ENCODE measurements at regions of chr6 and their contacts with region 1.

Region 1: DNA sequence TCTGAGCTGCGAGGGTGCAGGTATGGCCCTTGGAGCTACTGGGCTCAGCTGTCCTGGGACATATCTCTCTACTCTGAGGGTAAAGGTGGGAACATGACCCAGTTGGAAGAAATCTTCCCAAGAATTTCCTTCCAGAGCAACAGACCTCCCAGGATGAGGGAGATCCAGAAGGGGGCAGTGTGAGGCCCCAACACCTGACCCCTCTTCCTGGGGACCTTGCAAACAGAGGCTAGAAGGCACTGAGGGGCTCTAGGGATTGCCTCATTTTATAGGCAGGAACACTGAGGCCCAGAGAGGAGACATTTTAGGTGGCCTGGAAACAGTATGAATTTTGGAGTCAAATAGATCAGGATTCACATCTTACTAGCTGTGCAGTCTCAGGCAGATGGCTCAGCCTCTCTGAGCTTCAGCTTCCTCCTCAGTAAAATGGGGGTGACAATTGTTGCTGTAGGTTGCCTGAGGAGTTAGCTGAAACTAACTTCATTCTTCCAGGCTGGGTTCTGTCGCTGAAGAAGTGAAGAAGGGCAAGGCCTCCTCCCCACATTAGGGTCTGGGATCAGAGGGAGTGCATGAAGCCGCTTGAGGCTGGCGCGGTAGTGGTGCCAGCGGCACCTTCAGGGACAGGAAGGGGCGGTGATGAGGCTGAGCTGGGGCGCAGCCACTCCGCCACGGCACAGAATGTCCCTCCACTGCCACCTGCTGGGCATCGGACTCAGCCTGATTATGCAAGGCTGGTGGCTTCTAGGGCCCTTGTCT is 11.4 kb downstream of the KCNK17 start:
- DNase-seq: peak; percentile 90
- H3K4me3 Mint-ChIP-seq: peak overlapping the region; percentile 18
- H3K27ac Mint-ChIP-seq: peak overlapping the region; percentile 14
- H3K4me1 Mint-ChIP-seq: peaks cover 9% of the 10 kb centered on the region
- H3K27me3 Mint-ChIP-seq: no peaks in the 10 kb centered on the region

Region 2: DNA sequence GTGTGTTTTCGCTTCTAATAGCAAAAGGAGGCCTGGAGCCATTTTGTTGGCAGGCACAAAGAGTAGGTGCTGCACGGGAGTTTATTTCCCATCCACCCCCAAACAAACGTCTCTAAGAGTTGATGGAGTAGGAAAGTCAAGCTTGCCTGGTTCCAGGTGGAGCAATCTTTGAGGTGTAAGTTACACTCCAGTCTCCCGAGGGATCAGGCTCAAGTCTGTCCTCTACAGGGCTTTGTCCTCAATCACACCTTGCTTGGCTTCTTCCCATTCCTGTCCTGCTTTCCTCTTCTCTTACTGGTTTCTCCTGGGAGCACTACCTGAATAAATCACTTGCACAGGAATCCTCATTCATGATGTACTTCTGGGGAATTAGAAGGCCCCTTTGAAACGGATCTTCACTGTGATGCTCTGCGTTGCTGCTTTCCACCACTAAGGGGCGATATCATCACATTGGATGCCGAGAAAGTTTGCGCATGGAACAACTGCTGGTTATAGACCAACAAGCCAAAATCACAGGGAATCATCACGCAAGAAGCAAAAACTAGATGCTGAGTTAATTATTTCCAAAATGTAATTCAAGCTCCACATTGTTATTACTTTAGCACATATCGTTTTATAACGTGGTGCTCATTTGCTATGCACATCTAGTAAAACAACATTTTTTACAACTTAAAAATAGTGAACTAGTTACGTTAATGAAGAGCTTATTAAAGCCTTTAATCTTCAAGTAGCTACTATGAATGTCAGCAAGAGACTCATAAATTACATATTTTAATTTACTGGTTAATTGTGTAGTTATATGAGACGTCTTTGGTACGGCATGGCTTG is 430.9 kb before region 1 on chr6:
- CTCF ChIA-PET with region 1: interaction called, 10 read pairs
- POLR2A ChIA-PET with region 1: no interaction called
- DNase-seq: peak; percentile 66
- H3K4me3 Mint-ChIP-seq: no peak overlapping the region
- H3K27ac Mint-ChIP-seq: no peak overlapping the region
- H3K4me1 Mint-ChIP-seq: peaks cover 19% of the 10 kb centered on the region
- H3K27me3 Mint-ChIP-seq: peaks cover 6% of the 10 kb centered on the region

Region 3: DNA sequence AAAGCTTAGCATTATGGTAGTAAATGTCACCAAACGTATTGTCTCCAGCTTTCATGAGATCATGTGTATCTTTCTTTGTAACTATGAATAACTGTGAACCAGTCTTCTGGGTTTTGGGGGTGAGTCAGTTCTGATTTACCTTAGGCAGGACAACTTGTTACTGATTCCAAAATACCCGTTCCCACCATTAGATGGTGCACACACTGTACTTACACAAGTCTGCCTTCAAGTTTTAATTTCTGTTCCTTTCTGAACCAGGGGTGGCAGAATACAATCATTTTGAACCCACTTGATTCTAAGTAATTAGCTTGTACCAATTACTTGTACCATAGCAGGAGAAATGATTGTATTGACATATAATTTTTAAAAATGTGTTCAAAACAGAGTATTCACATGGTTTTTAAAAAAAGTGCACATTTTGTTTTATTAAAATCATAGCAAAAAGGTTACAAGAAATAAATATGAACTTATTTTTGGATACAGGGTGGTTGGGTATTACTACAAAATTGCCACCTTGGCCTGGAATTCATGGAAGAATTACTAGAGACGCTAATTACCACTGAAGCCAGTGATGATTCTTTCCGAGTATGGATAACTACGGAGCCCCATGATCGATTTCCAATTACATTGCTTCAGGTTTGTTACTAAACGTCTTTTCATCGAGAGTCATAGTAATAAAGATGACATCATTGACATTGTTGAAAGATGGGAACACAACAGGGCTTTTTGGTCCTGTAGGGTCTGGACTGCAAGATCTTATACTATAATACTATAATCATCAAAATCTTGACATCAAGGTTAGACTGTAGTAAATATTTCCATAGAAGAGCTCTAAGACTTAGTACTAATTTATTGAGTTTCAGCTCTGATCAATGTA is 329.4 kb before region 1 on chr6:
- CTCF ChIA-PET with region 1: interaction called, 16 read pairs
- POLR2A ChIA-PET with region 1: no interaction called
- DNase-seq: no peak
- H3K4me3 Mint-ChIP-seq: no peak overlapping the region
- H3K27ac Mint-ChIP-seq: no peak overlapping the region
- H3K4me1 Mint-ChIP-seq: no peaks in the 10 kb centered on the region
- H3K27me3 Mint-ChIP-seq: peaks cover 47% of the 10 kb centered on the region

Region 4: DNA sequence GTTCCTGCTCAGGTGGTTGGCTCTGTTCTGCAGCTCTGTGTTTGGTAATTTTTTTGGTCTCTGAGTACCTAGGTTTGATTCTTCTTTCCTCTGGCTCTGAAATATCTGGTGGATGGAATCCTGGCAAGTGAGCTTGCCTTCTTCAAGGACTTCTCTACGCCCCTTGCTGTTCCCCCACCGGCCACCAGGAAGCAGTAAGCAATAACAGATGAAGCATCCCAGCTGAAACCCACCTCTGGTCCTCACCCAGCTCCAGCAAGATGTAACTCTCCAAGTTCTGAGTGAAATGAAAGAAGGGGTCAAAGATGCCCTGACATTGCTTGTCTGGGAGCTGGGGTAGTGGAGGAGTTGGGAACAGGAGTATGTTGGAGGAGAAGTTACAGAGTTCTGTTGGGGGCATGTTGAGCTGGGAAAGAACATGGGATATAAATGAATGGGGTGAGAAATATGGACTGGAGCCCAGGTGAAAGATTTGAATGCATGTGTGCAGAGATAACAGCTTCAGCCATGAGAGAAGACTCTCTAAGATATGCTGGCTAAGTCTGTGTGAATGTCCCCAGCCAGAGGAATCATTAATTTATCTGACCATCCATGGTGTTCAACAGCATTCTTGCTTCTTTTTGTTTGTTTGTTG is 305.6 kb before region 1 on chr6:
- CTCF ChIA-PET with region 1: interaction called, 15 read pairs
- POLR2A ChIA-PET with region 1: no interaction called
- DNase-seq: peak; percentile 24
- H3K4me3 Mint-ChIP-seq: no peak overlapping the region
- H3K27ac Mint-ChIP-seq: no peak overlapping the region
- H3K4me1 Mint-ChIP-seq: no peaks in the 10 kb centered on the region
- H3K27me3 Mint-ChIP-seq: peaks cover 31% of the 10 kb centered on the region

Region 5: DNA sequence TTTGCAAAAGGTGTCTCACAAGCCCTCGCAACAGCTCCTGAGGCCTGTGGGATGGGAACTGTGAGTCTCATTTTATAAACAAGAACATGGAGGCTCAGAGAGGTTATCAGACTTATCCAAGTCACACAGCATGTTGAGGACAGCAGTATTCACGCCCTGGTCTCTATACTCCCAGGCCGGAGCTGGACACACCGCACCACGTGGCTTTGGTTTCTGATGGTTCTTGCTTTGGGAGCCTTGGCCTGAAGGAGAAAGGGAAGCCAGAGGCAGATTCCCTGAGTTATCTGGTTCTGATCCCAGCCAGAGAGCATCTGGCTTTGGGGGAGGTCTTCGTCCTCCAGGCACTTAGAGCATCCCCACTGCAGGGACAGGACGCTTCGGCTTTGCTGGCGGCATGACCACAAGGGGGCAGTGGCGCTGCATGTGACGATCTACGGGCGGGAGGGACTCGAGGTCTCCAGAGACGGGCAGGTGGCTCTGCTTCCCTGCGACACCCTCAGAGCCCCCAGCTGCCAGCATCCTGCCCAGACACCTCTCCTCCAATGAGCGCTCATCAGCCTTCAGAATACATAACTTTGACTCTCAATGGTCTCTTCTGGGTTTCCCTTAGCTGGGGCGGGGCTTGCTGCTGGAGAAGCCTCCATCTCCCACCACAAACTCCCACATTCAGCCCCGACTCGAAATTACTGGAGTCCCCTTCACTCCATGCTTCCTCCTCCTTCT is 136.5 kb before region 1 on chr6:
- CTCF ChIA-PET with region 1: interaction called, 195 read pairs
- POLR2A ChIA-PET with region 1: interaction called, 10 read pairs
- DNase-seq: peak; percentile 84
- H3K4me3 Mint-ChIP-seq: no peak overlapping the region
- H3K27ac Mint-ChIP-seq: no peak overlapping the region
- H3K4me1 Mint-ChIP-seq: peaks cover 5% of the 10 kb centered on the region
- H3K27me3 Mint-ChIP-seq: no peaks in the 10 kb centered on the region

Region 6: DNA sequence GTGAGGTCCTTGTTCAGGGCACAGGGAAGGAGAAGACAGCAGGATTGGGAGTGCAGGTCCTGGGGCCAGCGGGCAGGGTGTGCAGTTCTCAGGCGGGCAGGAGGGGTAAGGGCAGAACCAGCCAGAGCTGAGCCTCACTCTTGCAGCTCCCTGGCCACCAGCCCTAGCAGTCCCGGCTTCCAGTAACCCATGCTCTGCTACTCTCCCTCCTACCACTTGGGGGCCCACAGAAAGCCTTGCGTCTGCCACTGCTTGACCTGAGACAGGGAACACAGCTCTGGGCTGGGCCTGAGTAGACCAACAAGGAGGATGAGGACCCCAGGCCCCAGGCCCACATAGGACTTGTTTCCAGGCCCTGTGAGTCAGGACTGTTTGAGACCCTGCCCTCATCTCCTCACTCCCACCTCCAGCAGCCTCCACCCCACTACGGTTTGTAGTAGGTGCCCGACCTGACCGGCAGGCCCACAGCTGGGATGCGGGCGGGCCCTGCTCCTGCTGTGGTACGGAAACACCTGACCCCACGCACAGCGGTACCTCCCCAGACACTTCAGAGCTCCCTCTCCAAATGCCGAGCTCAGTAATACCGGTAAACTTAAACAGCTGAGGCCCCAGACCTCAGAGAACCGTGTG is 112.8 kb before region 1 on chr6:
- CTCF ChIA-PET with region 1: interaction called, 13 read pairs
- POLR2A ChIA-PET with region 1: no interaction called
- DNase-seq: no peak
- H3K4me3 Mint-ChIP-seq: no peak overlapping the region
- H3K27ac Mint-ChIP-seq: no peak overlapping the region
- H3K4me1 Mint-ChIP-seq: peaks cover 9% of the 10 kb centered on the region
- H3K27me3 Mint-ChIP-seq: no peaks in the 10 kb centered on the region

Region 7: GRCh38 chr6:39228992-39229767 is 73.7 kb before region 1 on chr6 and contains the start of gene KCNK5:
- CTCF ChIA-PET with region 1: interaction called, 16 read pairs
- POLR2A ChIA-PET with region 1: no interaction called
- DNase-seq: peak; percentile 90
- H3K4me3 Mint-ChIP-seq: peak within 1 kb of the TSS; percentile 68
- H3K27ac Mint-ChIP-seq: peak within 1 kb of the TSS; percentile 96
- H3K4me1 Mint-ChIP-seq: peaks cover 43% of the 10 kb centered on the region
- H3K27me3 Mint-ChIP-seq: no peaks in the 10 kb centered on the region
- total RNA-seq, gene KCNK5: 8.6 to 9.2 TPM

Measured in activated CD4-positive, alpha-beta memory T cell treated with anti-CD3 and anti-CD28 coated beads, Interleukin-2, amount 10 ng/mL, durations not matched to agents 7 days and 5 days (primary cell).